B cell (primary cell): ENCODE measurements at regions of chr2 and their contacts with region 1.

Region 1: DNA sequence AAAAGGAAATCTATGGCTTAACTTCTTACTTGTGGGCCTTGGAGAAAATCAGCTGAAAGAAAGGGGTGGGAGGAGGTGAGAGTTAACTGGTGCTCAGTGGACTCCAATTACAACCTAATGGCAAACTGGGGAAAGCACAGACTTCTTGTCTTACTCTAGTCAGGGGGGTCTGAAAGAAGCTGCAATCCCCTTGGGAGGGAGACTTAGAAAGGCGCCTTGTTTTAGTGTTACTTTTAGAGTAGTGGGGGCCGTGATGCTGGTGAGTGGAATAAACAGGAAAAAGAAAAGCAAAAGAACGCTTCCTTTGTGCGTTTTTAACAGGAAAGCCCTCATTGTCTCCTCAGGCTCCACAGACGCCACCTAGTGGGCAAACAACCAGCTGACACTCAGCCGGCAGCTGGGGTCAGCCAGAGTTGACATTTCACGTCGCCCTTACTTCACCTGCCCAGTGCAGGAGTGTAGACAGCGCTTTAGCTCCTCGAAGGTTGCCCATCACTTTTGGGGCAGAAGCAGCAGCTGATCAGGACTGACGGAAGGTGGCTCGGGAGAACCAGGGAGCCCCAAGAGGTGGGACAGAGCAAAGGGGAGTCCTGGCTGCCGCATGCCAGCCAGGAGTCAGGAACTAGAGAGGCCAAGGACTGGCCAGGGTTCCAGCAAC is 55.9 kb upstream of the GORASP2 start:
- DNase-seq: peak; percentile 71
- ATAC-seq: peak; percentile 70
- H3K4me3 ChIP-seq: peak overlapping the region in 4 of 5 experiments; percentile 8 to 46 (median 20)
- H3K4me3 Mint-ChIP-seq: peak overlapping the region; percentile 67
- H3K27ac ChIP-seq: no peak overlapping the region
- H3K27ac Mint-ChIP-seq: no peak overlapping the region
- H3K4me1 ChIP-seq: peaks cover 5 to 8% of the 10 kb centered on the region in 2 donors
- H3K4me1 Mint-ChIP-seq: peaks cover 9% of the 10 kb centered on the region
- H3K27me3 ChIP-seq: peaks cover 0 to 3% (median 0%) of the 10 kb centered on the region in 4 experiments
- H3K27me3 Mint-ChIP-seq: peaks cover 15% of the 10 kb centered on the region
- CTCF ChIP-seq: peak; percentile 85

Region 2: GRCh38 chr2:170862286-170862902 is 10.8 kb before region 1 on chr2:
- CTCF ChIA-PET with region 1: interaction called, 32 read pairs
- POLR2A ChIA-PET with region 1: no interaction called
- intact Hi-C with region 1: no loop called
- DNase-seq: no peak
- ATAC-seq: no peak
- H3K4me3 ChIP-seq: no peak overlapping the region
- H3K4me3 Mint-ChIP-seq: no peak overlapping the region
- H3K27ac ChIP-seq: no peak overlapping the region
- H3K27ac Mint-ChIP-seq: no peak overlapping the region
- H3K4me1 ChIP-seq: no peaks in the 10 kb centered on the region
- H3K4me1 Mint-ChIP-seq: no peaks in the 10 kb centered on the region
- H3K27me3 ChIP-seq: peaks cover 0 to 3% (median 0%) of the 10 kb centered on the region in 4 experiments
- H3K27me3 Mint-ChIP-seq: peaks cover 12% of the 10 kb centered on the region
- CTCF ChIP-seq: no peak

Region 3: GRCh38 chr2:170886386-170886785 is 13.2 kb after region 1 on chr2:
- CTCF ChIA-PET with region 1: interaction called, 19 read pairs
- POLR2A ChIA-PET with region 1: no interaction called
- intact Hi-C with region 1: no loop called
- DNase-seq: no peak
- ATAC-seq: no peak
- H3K4me3 ChIP-seq: no peak overlapping the region
- H3K4me3 Mint-ChIP-seq: no peak overlapping the region
- H3K27ac ChIP-seq: no peak overlapping the region
- H3K27ac Mint-ChIP-seq: no peak overlapping the region
- H3K4me1 ChIP-seq: no peaks in the 10 kb centered on the region
- H3K4me1 Mint-ChIP-seq: peaks cover 4% of the 10 kb centered on the region
- H3K27me3 ChIP-seq: no peaks in the 10 kb centered on the region
- H3K27me3 Mint-ChIP-seq: peaks cover 43% of the 10 kb centered on the region
- CTCF ChIP-seq: no peak

Region 4: DNA sequence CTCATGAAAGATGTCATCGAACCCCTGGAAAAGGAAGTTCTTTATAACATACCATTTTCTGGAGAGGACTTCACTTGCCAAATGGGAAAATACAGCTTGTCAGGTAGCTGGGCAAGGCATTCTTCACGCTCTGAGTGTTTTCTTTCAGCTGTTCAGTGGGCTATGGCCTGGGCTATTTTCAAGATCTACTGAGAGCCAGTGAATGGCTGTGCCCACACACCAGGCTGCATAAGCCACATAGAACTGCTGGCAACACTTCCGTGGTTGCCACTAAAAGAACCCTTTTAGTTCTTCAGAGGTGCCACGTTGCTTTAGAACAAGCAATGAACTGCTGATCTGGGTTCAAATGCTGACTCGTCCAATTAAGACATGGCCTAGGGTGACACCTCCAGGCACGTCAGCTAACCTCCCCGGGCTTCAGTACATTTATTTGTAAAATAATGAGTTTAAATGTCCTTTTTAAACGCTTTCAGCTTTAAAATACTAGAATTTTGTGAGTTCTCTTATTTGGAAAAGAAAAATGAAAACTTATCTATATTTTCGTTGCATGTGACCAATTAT is 19.3 kb after region 1 on chr2:
- CTCF ChIA-PET with region 1: interaction called, 11 read pairs
- POLR2A ChIA-PET with region 1: no interaction called
- intact Hi-C with region 1: no loop called
- DNase-seq: no peak
- ATAC-seq: no peak
- H3K4me3 ChIP-seq: no peak overlapping the region
- H3K4me3 Mint-ChIP-seq: no peak overlapping the region
- H3K27ac ChIP-seq: no peak overlapping the region
- H3K27ac Mint-ChIP-seq: no peak overlapping the region
- H3K4me1 ChIP-seq: no peaks in the 10 kb centered on the region
- H3K4me1 Mint-ChIP-seq: no peaks in the 10 kb centered on the region
- H3K27me3 ChIP-seq: no peaks in the 10 kb centered on the region
- H3K27me3 Mint-ChIP-seq: peaks cover 34% of the 10 kb centered on the region
- CTCF ChIP-seq: no peak

Region 5: DNA sequence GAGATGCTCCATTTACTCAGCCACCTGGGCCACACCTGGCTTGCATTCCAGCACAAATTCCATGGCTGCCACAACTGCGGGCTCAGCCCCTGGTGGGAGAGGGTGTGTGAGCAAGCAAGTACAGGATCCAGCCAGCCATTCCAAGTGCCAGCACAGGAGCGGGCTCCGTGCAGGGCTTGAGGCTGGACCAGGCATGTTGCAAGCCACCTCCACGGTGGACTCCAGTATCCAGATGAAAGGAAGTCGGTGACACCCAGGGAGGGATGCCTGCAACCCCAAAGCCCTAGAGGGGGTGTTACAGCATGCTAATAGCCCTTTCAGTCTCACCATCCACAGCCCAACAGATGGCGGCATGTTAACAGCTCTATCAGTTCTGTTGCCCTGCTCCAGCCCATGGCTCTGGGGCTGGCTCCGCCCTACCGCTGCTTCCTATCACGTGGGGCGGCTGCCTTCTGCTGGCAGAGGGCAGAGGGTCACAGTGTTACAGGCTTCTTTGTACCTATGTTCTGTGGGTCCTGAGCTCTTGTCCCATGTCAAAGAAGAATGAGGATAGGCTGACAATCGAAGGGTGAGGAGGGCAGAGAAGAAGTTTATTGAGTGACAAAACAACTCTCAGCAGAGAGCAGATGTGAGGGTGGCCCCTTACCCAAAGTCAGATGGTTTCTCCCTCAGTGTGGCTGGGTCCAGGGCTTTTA is 44.2 kb after region 1 on chr2:
- CTCF ChIA-PET with region 1: no interaction called
- POLR2A ChIA-PET with region 1: no interaction called
- intact Hi-C with region 1: no loop called
- DNase-seq: no peak
- ATAC-seq: no peak
- H3K4me3 ChIP-seq: no peak overlapping the region
- H3K4me3 Mint-ChIP-seq: no peak overlapping the region
- H3K27ac ChIP-seq: no peak overlapping the region
- H3K27ac Mint-ChIP-seq: peak overlapping the region; percentile 41
- H3K4me1 ChIP-seq: no peaks in the 10 kb centered on the region
- H3K4me1 Mint-ChIP-seq: peaks cover 2% of the 10 kb centered on the region
- H3K27me3 ChIP-seq: peaks cover 0 to 2% (median 0%) of the 10 kb centered on the region in 4 experiments
- H3K27me3 Mint-ChIP-seq: peaks cover 6% of the 10 kb centered on the region
- CTCF ChIP-seq: no peak